ENCODE measurements at regions of chr22 and their contacts with region 1.

Region 1: GRCh38 chr22:41780746-41781505 is 19.6 kb upstream of the CCDC134 start:
- DNase-seq: peak; percentile 97
- H3K4me3 Mint-ChIP-seq: peak overlapping the region; percentile 78
- H3K27ac Mint-ChIP-seq: peak overlapping the region; percentile 97
- H3K4me1 Mint-ChIP-seq: peaks cover 46% of the 10 kb centered on the region
- H3K27me3 Mint-ChIP-seq: no peaks in the 10 kb centered on the region

Region 2: DNA sequence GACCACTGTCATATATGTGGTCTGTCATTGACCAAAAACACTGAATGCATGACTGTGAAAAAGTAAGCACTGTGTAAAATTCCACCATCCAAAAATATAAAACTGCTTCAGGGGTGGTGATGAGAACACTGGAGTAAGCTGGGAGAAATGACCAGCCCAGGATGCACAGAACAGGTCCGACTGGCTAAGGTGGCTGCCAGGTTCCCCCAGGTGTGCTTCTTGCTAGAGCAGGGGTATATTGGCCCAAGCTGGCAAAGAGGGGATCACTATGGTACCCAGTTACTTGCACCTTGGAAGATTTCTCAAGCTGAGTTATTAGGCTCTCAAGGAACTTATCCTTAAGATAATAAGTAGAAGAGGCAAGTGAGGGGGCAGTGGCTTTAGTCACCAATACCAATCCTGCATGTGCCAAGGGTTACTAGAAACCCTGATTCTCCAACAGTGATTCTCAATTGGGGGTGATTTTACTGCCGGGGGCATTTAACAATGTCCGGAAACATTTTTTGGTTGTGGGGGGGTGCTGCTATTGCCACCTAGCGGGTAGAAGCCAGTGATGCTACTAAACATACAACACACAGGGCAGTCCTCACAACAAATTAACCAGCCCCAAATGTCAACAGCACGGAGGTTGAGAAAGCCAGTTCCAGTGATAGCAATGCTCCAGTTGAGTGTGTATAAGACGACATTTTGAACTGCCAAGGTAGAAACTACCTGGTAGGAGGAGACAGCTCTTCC is 108.0 kb before region 1 on chr22:
- CTCF ChIA-PET with region 1: no interaction called
- POLR2A ChIA-PET with region 1: no interaction called
- DNase-seq: no peak
- H3K4me3 Mint-ChIP-seq: no peak overlapping the region
- H3K27ac Mint-ChIP-seq: no peak overlapping the region
- H3K4me1 Mint-ChIP-seq: peaks cover 14% of the 10 kb centered on the region
- H3K27me3 Mint-ChIP-seq: no peaks in the 10 kb centered on the region

Region 3: GRCh38 chr22:41768430-41768829 is 12.5 kb before region 1 on chr22:
- CTCF ChIA-PET with region 1: interaction called, 13 read pairs
- POLR2A ChIA-PET with region 1: no interaction called
- DNase-seq: no peak
- H3K4me3 Mint-ChIP-seq: no peak overlapping the region
- H3K27ac Mint-ChIP-seq: no peak overlapping the region
- H3K4me1 Mint-ChIP-seq: no peaks in the 10 kb centered on the region
- H3K27me3 Mint-ChIP-seq: no peaks in the 10 kb centered on the region

Region 4: GRCh38 chr22:41793871-41794270 is 12.9 kb after region 1 on chr22:
- CTCF ChIA-PET with region 1: interaction called, 38 read pairs
- POLR2A ChIA-PET with region 1: no interaction called
- DNase-seq: no peak
- H3K4me3 Mint-ChIP-seq: no peak overlapping the region
- H3K27ac Mint-ChIP-seq: no peak overlapping the region
- H3K4me1 Mint-ChIP-seq: peaks cover 3% of the 10 kb centered on the region
- H3K27me3 Mint-ChIP-seq: no peaks in the 10 kb centered on the region

Region 5: GRCh38 chr22:41800348-41801146 is 19.6 kb after region 1 on chr22 and contains the start of gene CCDC134:
- CTCF ChIA-PET with region 1: interaction called, 38 read pairs
- POLR2A ChIA-PET with region 1: interaction called, 39 read pairs
- DNase-seq: peak; percentile 91
- H3K4me3 Mint-ChIP-seq: peak within 1 kb of the TSS; percentile 99
- H3K27ac Mint-ChIP-seq: peak within 1 kb of the TSS; percentile 98
- H3K4me1 Mint-ChIP-seq: peaks cover 47% of the 10 kb centered on the region
- H3K27me3 Mint-ChIP-seq: no peaks in the 10 kb centered on the region
- total RNA-seq, gene CCDC134: 21.0 to 21.6 TPM